ENCODE measurements at regions of chr21 and their contacts with region 1.

Region 1: DNA sequence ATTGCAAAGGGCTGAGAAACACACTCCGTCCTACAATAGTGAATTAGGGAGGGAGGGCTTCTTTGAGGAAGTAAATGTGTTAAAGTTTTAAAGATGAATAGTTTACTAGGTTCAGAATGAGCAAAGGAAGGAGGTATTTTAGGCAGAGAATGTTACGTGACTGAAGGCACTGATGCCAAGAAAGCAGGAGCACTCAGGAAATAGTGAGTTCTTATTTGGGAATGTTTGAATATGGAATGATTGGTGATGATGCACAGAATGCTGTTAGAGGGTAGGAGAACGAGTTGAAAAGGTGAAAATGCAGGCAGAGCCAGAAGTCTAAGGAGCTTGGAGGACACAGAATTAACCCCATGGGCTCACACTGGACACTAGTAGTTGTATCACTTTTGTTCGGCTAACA is 108.0 kb downstream of the NRIP1 start:
- DNase-seq: no peak
- ATAC-seq: no peak
- H3K4me3 ChIP-seq: no peak overlapping the region
- H3K27ac ChIP-seq: no peak overlapping the region
- H3K4me1 ChIP-seq: peaks cover 0 to 2% of the 10 kb centered on the region in 2 donors
- H3K27me3 ChIP-seq: no peaks in the 10 kb centered on the region

Region 2: GRCh38 chr21:15064576-15065391 is 108.0 kb after region 1 on chr21 and contains the start of gene NRIP1:
- intact Hi-C with region 1: loop called in 1 of 2 experiments (anchors 5 kb)
- DNase-seq: peak; percentile 96
- ATAC-seq: peak; percentile 94
- H3K4me3 ChIP-seq: peak within 1 kb of the TSS; percentile 97 to 98
- H3K27ac ChIP-seq: peak within 1 kb of the TSS; percentile 75 to 89
- H3K4me1 ChIP-seq: no peaks in the 10 kb centered on the region
- H3K27me3 ChIP-seq: no peaks in the 10 kb centered on the region
- total RNA-seq, gene NRIP1: 28.6 to 37.1 TPM

Measured in aorta (tissue), 5 donors.